CD8-positive, alpha-beta memory T cell (primary cell): ENCODE measurements at regions of chr7 and their contacts with region 1.

Region 1: DNA sequence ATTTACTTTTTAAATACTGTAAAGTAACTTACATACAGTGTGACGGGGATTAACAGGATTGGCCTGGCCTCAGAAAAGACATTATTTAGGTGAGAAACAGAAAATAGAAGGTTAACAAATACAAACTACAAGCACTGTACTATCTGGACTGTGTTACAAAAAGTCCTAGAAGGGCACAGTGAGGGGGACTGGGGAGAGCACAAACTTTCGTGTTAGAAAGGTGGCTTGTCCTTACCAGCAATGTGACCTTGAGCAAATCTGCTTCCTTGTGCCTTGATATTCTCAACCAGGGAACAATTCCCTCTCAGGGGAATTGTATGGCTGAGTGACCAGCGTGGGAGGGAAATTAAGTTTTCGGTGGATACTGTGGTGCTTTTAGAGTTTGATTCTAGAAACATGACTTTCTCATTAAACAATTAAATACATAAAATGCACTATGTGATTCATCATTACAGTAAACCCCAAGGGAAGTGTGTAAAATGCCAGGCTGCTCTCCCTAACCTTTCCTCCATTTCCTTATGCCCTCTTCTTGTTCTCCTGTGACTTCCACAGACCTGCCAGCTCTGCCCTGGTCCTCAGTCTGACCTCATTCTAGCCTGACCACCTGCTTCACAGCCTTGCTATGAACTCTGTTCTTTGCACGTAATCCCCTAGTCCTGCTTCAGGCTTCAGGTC is 57.7 kb downstream of the OSBPL3 start:
- DNase-seq: no peak
- H3K4me3 ChIP-seq: no peak overlapping the region
- H3K4me3 Mint-ChIP-seq: peak overlapping the region in 1 of 7 donors; percentile 1
- H3K27ac ChIP-seq: no peak overlapping the region
- H3K27ac Mint-ChIP-seq: peak overlapping the region in 6 of 8 donors; percentile 44 to 84 (median 76)
- H3K4me1 ChIP-seq: peaks cover 23% of the 10 kb centered on the region
- H3K4me1 Mint-ChIP-seq: peaks cover 77 to 98% (median 96%) of the 10 kb centered on the region in 3 donors
- H3K27me3 ChIP-seq: no peaks in the 10 kb centered on the region
- H3K27me3 Mint-ChIP-seq: no peaks in the 10 kb centered on the region

Region 2: DNA sequence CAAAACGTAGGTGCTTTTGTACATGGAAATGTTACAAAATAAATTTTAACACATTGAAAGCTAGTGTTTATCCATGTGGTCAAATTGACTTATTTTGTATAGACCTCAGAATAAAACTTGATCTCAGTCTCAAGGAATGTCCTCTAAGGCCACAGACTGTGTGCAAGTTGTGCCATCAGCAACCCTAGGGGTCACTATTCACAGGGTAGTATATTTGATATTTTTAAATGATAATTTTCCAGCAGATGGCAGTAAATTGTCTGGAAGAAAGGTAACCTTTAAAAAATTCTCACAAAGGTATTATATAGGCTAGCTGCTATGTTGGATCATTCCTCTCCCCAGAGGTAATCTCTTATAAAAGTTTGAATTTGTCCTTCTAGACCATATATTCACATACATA is 1356.5 kb after region 1 on chr7:
- CTCF ChIA-PET with region 1: no interaction called
- POLR2A ChIA-PET with region 1: interaction called, 10 read pairs
- DNase-seq: peak in 1 of 5 donors; percentile 26
- H3K4me3 ChIP-seq: no peak overlapping the region
- H3K4me3 Mint-ChIP-seq: peak overlapping the region in 2 of 7 donors; percentile 23
- H3K27ac ChIP-seq: no peak overlapping the region
- H3K27ac Mint-ChIP-seq: peak overlapping the region in 1 of 8 donors; percentile 36
- H3K4me1 ChIP-seq: peaks cover 3% of the 10 kb centered on the region
- H3K4me1 Mint-ChIP-seq: peaks cover 10 to 19% (median 15%) of the 10 kb centered on the region in 3 donors
- H3K27me3 ChIP-seq: no peaks in the 10 kb centered on the region
- H3K27me3 Mint-ChIP-seq: no peaks in the 10 kb centered on the region